HEK293 (cell line): ENCODE measurements at regions of chr18 and their contacts with region 1.

Region 1: DNA sequence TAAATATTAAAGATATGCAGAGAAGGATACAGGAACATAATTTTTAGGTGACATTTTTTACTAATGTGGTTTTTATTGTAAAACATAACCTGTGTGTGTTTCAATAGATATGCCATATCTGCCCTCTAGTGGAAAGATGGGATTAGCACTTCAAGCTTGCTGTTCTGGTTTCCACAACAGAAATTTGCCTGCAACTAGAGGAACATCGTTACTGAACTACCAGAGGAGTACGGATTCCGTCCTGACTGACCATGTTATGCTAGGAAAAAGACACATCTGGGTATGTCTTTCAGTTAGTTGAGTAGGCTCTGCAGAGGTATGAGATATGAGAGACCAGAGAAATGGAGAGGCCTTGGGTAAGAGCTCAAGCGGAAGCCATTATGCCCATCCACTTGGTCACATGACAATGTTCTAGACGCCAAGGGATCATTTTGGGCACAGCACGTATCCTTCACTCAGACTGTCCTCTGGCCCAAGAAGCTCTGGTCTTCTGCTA is 104.9 kb downstream of the MBD2 start:
- H3K4me3 ChIP-seq: no peak overlapping the region; the same call in 1 of the 2 replicates
- H3K27ac ChIP-seq: no peak overlapping the region
- H3K4me1 ChIP-seq: no peaks in the 10 kb centered on the region
- CTCF ChIP-seq: peak; percentile 27; the same call in 1 of the 2 replicates

Region 2: GRCh38 chr18:53567929-53568574 is 551.5 kb before region 1 on chr18:
- CTCF ChIA-PET with region 1: interaction called, 12 read pairs
- POLR2A ChIA-PET with region 1: no interaction called
- H3K4me3 ChIP-seq: no peak overlapping the region
- H3K27ac ChIP-seq: no peak overlapping the region
- H3K4me1 ChIP-seq: no peaks in the 10 kb centered on the region
- CTCF ChIP-seq: no peak

Region 3: GRCh38 chr18:53698907-53699306 is 420.7 kb before region 1 on chr18:
- CTCF ChIA-PET with region 1: interaction called, 30 read pairs
- POLR2A ChIA-PET with region 1: no interaction called
- H3K4me3 ChIP-seq: no peak overlapping the region
- H3K27ac ChIP-seq: no peak overlapping the region
- H3K4me1 ChIP-seq: no peaks in the 10 kb centered on the region
- CTCF ChIP-seq: no peak

Region 4: DNA sequence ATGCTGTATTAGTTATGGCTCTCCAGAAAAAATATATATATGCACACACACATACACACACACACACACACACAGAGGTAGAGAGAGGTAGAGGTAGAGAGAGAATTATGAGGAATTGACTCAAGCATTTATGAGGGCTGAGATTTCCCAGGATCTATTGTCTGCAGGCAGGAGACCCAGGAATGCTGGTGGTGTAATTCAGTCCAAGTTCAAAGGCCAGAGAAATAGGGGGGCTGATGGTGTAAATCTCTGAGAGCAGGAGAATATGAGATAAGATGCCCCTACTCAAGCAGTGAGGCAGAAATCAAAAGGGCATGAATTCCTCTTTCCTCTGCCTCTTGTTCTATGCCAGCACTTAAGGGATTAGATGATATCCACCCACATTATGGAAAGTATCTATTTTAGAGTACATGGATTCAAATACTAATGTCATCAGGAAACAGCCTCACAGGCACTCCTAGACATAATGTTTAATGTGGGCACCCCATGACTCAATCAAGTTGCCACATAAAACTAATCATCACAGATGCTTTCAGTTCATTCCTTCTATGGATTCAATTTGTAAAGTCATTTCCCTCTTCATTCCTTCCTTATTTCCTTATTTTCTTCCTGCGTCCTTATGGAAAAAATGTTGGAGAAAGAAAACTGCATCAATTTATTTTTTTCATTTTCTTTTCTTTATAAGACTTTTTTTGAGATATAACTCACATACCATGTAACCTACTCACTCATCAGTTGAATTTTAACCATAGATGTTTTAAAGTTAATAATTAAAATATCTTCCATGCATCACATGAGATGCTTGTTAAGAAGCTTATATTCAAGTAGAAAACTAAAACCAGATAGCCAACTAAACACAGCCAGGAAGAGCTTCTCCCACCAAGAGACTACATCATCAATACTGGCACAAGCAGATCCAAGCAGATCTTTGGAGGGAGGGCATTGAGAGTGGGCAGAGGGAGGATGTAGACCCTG is 301.3 kb before region 1 on chr18:
- CTCF ChIA-PET with region 1: no interaction called
- POLR2A ChIA-PET with region 1: no interaction called
- H3K4me3 ChIP-seq: no peak overlapping the region
- H3K27ac ChIP-seq: no peak overlapping the region
- H3K4me1 ChIP-seq: no peaks in the 10 kb centered on the region
- CTCF ChIP-seq: no peak

Region 5: GRCh38 chr18:54109131-54109683 is 10.4 kb before region 1 on chr18:
- CTCF ChIA-PET with region 1: interaction called, 10 read pairs
- POLR2A ChIA-PET with region 1: no interaction called
- H3K4me3 ChIP-seq: no peak overlapping the region
- H3K27ac ChIP-seq: no peak overlapping the region
- H3K4me1 ChIP-seq: no peaks in the 10 kb centered on the region
- CTCF ChIP-seq: no peak